CD4-positive, alpha-beta memory T cell (primary cell): ENCODE measurements at regions of chr17 and their contacts with region 1.

Region 1: GRCh38 chr17:45640141-45640850 is 143.8 kb upstream of the CRHR1 start:
- DNase-seq: peak; percentile 59 to 64 (median 63)
- H3K4me3 ChIP-seq: no peak overlapping the region
- H3K4me3 Mint-ChIP-seq: no peak overlapping the region
- H3K27ac ChIP-seq: no peak overlapping the region
- H3K27ac Mint-ChIP-seq: peak overlapping the region in 3 of 7 donors; percentile 10 to 67 (median 55)
- H3K4me1 ChIP-seq: no peaks in the 10 kb centered on the region
- H3K4me1 Mint-ChIP-seq: peaks cover 6 to 12% (median 6%) of the 10 kb centered on the region in 4 donors
- H3K27me3 ChIP-seq: no peaks in the 10 kb centered on the region
- H3K27me3 Mint-ChIP-seq: no peaks in the 10 kb centered on the region

Region 2: DNA sequence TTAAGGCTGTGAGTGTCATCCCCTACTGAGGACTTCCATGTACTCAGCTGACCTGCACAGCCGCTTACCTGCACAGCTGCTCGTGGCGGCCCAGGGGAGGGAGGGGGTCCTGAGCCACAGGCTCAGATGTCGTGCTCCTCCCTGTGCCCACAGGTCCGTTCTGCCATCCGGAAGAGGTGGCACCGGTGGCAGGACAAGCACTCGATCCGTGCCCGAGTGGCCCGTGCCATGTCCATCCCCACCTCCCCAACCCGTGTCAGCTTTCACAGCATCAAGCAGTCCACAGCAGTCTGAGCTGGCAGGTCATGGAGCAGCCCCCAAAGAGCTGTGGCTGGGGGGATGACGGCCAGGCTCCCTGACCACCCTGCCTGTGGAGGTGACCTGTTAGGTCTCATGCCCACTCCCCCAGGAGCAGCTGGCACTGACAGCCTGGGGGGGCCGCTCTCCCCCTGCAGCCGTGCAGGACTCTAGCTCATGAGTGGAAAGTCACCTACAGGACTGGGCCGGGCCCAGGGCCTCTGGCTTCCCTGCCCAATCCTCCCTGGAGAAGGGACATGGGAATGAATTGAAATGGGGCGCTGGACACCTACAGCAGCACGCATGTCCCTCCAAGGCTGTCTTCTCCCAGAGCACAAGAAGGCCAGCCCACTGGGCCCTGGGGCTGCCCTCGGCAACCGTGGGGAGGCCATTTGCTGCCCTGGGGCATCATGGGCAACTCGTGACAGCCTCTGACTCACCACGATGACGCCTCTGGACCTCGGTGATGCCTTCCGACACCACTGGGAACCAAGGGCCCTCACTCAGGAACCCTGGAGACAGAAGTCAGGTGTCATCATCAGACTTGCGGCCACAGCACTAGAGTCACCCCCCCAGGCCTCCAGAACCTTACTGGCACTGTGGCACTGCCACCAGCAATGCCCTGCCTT is 194.4 kb after region 1 on chr17:
- CTCF ChIA-PET with region 1: interaction called, 149 read pairs
- POLR2A ChIA-PET with region 1: interaction called, 6 read pairs
- intact Hi-C with region 1: no loop called
- DNase-seq: no peak
- H3K4me3 ChIP-seq: no peak overlapping the region
- H3K4me3 Mint-ChIP-seq: no peak overlapping the region
- H3K27ac ChIP-seq: no peak overlapping the region
- H3K27ac Mint-ChIP-seq: no peak overlapping the region
- H3K4me1 ChIP-seq: no peaks in the 10 kb centered on the region
- H3K4me1 Mint-ChIP-seq: no peaks in the 10 kb centered on the region
- H3K27me3 ChIP-seq: no peaks in the 10 kb centered on the region
- H3K27me3 Mint-ChIP-seq: peaks cover 3 to 5% of the 10 kb centered on the region in 2 donors